ENCODE measurements at regions of chr7 and their contacts with region 1.

Region 1: GRCh38 chr7:127392566-127393367 is at the start of gene ZNF800:
- DNase-seq: peak; percentile 82
- H3K4me3 Mint-ChIP-seq: peak within 1 kb of the TSS; percentile 91
- H3K27ac Mint-ChIP-seq: peak within 1 kb of the TSS; percentile 95
- H3K4me1 Mint-ChIP-seq: peaks cover 25% of the 10 kb centered on the region
- H3K27me3 Mint-ChIP-seq: no peaks in the 10 kb centered on the region
- CTCF ChIP-seq: no peak
- total RNA-seq, gene ZNF800: 51.7 and 55.1 TPM in 2 replicates

Region 2: DNA sequence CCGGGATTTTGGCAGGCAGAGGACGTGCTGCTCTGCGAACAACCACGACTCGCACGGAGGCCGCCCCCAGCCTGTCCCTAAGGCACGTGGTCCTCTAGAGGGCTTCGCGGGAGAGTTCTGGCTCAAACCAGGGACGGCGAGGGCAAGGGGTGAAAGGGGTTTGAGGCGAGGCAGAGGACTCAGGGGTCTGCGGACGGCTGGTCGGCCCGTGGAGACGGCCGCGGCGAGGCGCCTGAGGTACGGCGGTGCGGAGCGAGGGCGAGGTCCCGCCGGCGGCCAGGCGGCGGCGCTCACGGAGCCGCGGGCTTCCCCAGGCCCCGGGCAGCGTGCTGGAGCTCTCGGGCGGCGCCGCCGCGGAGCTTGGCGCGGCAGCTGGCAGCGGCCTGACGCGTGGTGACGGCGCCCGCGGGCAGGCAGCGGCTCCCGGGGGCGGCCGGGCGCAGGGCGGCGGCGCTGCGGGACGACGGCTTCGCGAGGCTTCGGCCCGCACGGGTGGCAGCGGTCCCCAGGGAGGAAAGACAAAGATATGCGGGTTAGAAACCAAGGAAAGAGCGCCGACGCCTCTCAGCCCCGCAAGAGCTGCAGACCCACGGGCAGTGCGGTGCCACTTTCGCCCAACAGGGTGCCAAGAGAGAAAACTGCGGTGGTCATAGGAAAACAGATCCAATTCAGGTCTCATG is 45.1 kb before region 1 on chr7:
- CTCF ChIA-PET with region 1: no interaction called
- POLR2A ChIA-PET with region 1: interaction called, 11 read pairs
- intact Hi-C with region 1: no loop called
- DNase-seq: no peak
- H3K4me3 Mint-ChIP-seq: peak overlapping the region; percentile 50
- H3K27ac Mint-ChIP-seq: peak overlapping the region; percentile 42
- H3K4me1 Mint-ChIP-seq: no peaks in the 10 kb centered on the region
- H3K27me3 Mint-ChIP-seq: no peaks in the 10 kb centered on the region
- CTCF ChIP-seq: peak; percentile 23

Region 3: GRCh38 chr7:127365164-127365956 is 27.4 kb before region 1 on chr7:
- CTCF ChIA-PET with region 1: no interaction called
- POLR2A ChIA-PET with region 1: interaction called, 10 read pairs
- intact Hi-C with region 1: no loop called
- DNase-seq: no peak
- H3K4me3 Mint-ChIP-seq: no peak overlapping the region
- H3K27ac Mint-ChIP-seq: no peak overlapping the region
- H3K4me1 Mint-ChIP-seq: no peaks in the 10 kb centered on the region
- H3K27me3 Mint-ChIP-seq: no peaks in the 10 kb centered on the region
- CTCF ChIP-seq: no peak

Region 4: GRCh38 chr7:127377425-127377824 is 15.3 kb before region 1 on chr7:
- CTCF ChIA-PET with region 1: interaction called, 3 read pairs
- POLR2A ChIA-PET with region 1: interaction called, 31 read pairs
- intact Hi-C with region 1: no loop called
- DNase-seq: no peak
- H3K4me3 Mint-ChIP-seq: no peak overlapping the region
- H3K27ac Mint-ChIP-seq: peak overlapping the region; percentile 27
- H3K4me1 Mint-ChIP-seq: peaks cover 31% of the 10 kb centered on the region
- H3K27me3 Mint-ChIP-seq: no peaks in the 10 kb centered on the region
- CTCF ChIP-seq: no peak

Region 5: DNA sequence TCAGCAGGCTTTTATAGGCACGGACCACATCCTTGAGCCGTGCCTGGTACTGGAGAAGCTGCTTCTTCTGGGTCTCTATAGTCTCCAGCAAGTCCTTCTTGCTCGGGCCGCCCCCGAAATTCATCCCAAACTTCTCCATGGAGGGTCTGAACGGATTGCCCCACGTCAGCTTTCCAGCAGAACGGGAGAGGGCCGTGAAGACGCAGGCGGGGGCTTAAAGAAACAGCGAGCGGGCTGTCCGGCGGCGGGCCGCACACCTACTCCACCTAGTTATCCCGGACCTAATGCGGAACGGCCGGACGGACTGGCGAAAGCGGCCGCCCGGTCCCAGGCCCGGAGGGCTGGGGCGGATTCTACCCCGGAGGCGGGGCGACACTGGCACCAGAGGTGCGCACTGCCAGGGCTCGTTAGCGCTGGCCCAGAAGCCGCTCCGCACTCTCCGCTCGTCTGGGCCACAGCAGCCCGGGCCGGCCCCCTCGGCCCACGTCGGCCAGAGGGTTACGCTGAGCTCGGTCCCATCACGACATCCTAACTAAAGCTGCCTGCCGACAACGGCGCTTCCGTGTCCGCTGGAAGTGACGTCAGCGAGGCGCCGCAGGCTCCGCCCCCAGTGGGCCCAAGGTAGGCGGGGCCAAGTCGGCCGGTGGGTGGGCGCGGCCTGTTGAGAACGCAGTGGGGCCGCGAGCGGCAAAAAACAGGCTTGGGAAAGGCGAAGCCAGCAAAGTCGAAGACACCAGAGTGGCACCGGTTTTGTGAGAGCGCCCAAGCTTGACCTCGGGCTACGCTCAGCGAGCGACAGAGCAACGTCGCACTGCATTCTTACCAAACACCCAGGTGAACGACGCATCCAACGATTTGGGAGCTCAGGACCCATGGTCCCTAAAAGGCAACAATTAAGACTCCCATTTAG is 192.5 kb after region 1 on chr7 and contains the start of gene GCC1:
- CTCF ChIA-PET with region 1: interaction called, 4 read pairs
- POLR2A ChIA-PET with region 1: interaction called, 41 read pairs
- intact Hi-C with region 1: loop called (anchors 10 kb)
- DNase-seq: peak; percentile 80
- H3K4me3 Mint-ChIP-seq: peak within 1 kb of the TSS; percentile 79
- H3K27ac Mint-ChIP-seq: peak within 1 kb of the TSS; percentile 90
- H3K4me1 Mint-ChIP-seq: peaks cover 38% of the 10 kb centered on the region
- H3K27me3 Mint-ChIP-seq: no peaks in the 10 kb centered on the region
- CTCF ChIP-seq: no peak
- total RNA-seq, gene GCC1: 27.7 and 30.2 TPM in 2 replicates